Mammary epithelial cell (primary cell): ENCODE measurements at regions of chr1 and their contacts with region 1.

Region 1: DNA sequence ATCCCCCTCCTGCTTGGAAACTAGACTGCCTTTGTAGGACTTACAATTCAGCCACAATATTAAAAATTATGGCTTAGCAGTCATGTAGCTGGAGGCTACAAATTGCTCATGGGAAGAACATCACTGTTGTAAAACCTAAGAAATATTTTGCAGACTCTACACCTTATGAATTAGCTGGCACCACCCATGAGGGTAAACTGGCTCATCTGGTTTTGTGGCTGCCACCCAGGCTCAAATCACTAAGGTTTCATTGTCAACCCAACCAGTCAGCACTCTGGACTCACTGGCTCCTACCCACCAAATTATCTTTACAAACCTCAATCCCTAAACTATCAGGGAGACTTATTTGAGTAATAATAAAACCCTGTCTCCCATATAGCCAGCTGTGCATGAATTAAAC is 100.7 kb upstream of the OLFM3 start:
- DNase-seq: peak; percentile 92
- H3K4me3 ChIP-seq: no peak overlapping the region
- H3K27ac ChIP-seq: peak overlapping the region; percentile 74
- H3K4me1 ChIP-seq: peaks cover 29% of the 10 kb centered on the region
- H3K27me3 ChIP-seq: no peaks in the 10 kb centered on the region
- CTCF ChIP-seq: no peak

Region 2: DNA sequence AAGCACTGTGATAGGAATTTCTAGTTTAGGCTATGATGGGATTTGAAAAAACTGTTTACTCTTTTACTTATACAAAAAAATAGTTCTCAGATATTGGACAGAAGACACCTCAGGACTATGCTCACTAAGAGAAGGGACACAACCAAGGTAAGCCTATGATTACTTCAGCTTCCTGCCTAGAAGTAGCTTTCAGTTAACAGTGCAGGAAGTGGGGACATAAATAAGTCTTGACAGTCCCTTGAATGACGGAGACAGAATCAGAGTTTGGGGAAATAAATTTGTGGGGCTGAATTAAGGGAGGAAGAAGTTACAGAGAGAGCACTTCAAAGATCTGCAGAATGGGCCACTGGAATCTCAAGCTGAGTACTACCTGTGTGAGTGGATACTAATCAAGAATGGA is 46.9 kb before region 1 on chr1:
- CTCF ChIA-PET with region 1: no interaction called
- dilution Hi-C with region 1: loop called (anchors 5 kb)
- in situ Hi-C with region 1: no loop called
- intact Hi-C with region 1: no loop called
- DNase-seq: no peak
- H3K4me3 ChIP-seq: no peak overlapping the region
- H3K27ac ChIP-seq: no peak overlapping the region
- H3K4me1 ChIP-seq: no peaks in the 10 kb centered on the region
- H3K27me3 ChIP-seq: no peaks in the 10 kb centered on the region
- CTCF ChIP-seq: no peak

Region 3: GRCh38 chr1:102085896-102086295 is 11.6 kb before region 1 on chr1:
- CTCF ChIA-PET with region 1: no interaction called
- dilution Hi-C with region 1: no loop called
- in situ Hi-C with region 1: no loop called
- intact Hi-C with region 1: loop called (anchors 1 kb)
- DNase-seq: peak; percentile 86
- H3K4me3 ChIP-seq: no peak overlapping the region
- H3K27ac ChIP-seq: peak overlapping the region; percentile 75
- H3K4me1 ChIP-seq: peaks cover 40% of the 10 kb centered on the region
- H3K27me3 ChIP-seq: no peaks in the 10 kb centered on the region
- CTCF ChIP-seq: no peak